Prostate gland (tissue), 2 donors: ENCODE measurements at regions of chr19 and their contacts with region 1.

Region 1: DNA sequence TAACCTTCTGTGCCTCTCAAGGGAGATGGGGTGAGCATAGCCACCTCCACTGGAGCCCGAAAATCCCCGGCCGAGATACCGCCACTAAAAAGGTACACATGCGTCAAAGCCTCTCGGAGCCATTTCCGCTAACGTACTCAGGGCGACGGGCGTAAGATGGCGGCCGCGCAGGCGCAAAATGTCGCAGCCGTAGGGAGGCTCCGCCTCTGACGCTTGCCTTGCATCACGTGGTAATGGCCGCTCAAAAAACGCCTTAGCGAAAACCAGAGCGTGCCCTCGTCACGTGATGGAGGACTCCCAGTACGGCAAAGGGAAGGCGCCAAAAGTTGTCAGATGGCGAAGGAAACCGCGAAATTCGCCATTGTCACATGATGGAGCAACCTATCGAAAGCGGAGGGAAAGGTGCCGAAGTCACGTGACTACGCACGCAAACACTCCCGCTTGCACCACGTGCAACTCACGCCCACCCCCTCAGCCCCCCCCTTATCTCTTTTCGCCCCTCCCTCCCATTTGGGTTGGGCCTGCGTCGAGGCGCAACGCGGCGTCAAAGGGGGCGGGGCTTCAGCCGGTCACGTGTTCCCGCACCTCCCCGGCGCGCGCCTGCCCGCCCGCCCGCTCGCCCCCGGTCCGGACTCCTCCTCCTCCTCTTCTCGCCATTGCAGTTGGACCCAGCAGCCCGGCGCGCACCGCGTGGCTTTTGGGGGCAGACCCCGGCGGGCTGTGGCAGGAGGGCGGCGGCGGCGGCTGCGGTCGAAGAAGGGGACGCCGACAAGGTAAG is at the start of gene ILF3:
- DNase-seq: peak; percentile 100
- H3K4me3 ChIP-seq: peak within 1 kb of the TSS; percentile 99 to 100
- H3K27ac ChIP-seq: peak within 1 kb of the TSS; percentile 98 to 99
- H3K4me1 ChIP-seq: peaks cover 7% of the 10 kb centered on the region
- H3K27me3 ChIP-seq: no peaks in the 10 kb centered on the region
- CTCF ChIP-seq: peak in 1 of 4 experiments; percentile 27
- POLR2A ChIP-seq: peak; percentile 94
- total RNA-seq, gene ILF3: 112 to 192 TPM

Region 2: GRCh38 chr19:10690341-10690781 is 36.5 kb after region 1 on chr19:
- intact Hi-C with region 1: loop called (anchors 5 kb)
- DNase-seq: no peak
- H3K4me3 ChIP-seq: no peak overlapping the region
- H3K27ac ChIP-seq: no peak overlapping the region
- H3K4me1 ChIP-seq: no peaks in the 10 kb centered on the region
- H3K27me3 ChIP-seq: no peaks in the 10 kb centered on the region
- CTCF ChIP-seq: no peak
- POLR2A ChIP-seq: no peak